Endothelial cell of umbilical vein (primary cell): ENCODE measurements at regions of chr10 and their contacts with region 1.

Region 1: DNA sequence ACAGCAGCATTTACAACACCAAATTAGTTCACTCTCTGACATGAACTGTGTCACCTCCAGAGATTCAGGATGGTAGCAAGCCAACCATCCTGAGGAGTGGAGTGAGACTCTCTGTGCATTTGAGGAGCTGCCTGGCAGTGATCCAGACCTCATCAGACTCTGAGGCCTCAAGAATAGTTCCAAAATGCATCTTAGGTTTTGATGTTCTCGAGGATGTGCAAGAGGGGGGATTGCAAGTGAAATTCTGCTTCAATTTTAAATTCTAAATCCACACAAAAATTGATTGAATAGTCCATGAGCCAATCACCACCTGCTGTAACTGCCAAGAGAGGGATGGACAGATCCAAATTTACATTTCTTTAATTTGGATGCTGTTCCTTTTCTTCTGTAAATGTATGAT is 49.7 kb downstream of the SLK start:
- DNase-seq: no peak
- H3K4me3 ChIP-seq: no peak overlapping the region
- H3K27ac ChIP-seq: no peak overlapping the region
- H3K4me1 ChIP-seq: peaks cover 13% of the 10 kb centered on the region
- H3K27me3 ChIP-seq: no peaks in the 10 kb centered on the region
- CTCF ChIP-seq: no peak
- POLR2A ChIP-seq: no peak

Region 2: GRCh38 chr10:103918053-103918846 is 98.4 kb before region 1 on chr10 and contains the start of gene STN1:
- CTCF ChIA-PET with region 1: no interaction called
- POLR2A ChIA-PET with region 1: interaction called, 14 read pairs
- dilution Hi-C with region 1: no loop called
- intact Hi-C with region 1: loop called (anchors 5 kb)
- DNase-seq: peak; percentile 96
- H3K4me3 ChIP-seq: peak within 1 kb of the TSS; percentile 15 to 63 (median 39)
- H3K27ac ChIP-seq: peak within 1 kb of the TSS; percentile 76
- H3K4me1 ChIP-seq: peaks cover 36% of the 10 kb centered on the region
- H3K27me3 ChIP-seq: no peaks in the 10 kb centered on the region
- CTCF ChIP-seq: no peak
- POLR2A ChIP-seq: peak; percentile 81
- total RNA-seq, gene STN1: 12.7 and 15.3 TPM in 2 replicates

Region 3: DNA sequence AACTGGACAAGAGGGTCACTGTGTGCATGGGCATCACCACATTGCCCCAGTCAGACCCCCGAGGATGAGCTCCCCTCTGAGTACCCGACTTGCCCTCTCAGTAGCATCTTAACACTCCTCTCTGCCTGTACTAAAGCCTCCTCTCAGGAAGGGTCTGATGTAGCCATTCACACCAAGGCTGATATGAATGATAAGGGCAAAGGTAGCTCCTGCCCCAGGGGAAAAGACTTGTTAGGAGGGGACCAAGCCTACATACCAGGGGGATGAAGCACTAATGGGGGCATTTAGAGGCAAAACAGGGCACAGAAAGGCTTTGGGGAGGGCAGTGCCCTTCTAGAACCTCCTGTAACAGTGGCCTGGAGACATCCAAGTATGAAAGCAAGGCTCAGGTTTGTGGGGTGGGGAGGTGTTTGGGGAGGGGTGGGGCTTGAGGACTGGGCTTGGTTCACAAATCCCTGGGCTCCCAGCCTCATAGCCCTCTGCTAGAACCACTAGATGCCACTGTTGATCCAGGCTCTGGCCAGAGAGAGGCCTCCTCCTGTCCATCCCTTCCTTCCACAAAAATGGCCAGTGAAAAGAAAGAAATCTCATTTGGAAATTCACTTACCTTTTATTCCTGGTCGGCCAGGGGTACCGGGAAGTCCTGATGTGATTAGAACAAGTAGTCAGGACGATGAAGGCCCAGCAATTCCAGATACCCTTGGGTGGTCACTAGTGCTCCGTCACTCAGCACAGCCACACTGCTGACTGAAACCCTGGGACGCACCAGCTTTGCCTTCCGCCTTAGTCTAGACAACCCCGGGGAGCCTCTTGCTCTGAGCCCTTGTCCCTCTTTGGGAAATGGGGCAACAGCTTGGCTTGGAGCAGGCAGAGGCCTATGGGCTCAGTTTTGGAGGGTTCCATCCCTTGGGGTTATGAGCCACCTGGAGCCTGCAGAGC is 28.8 kb after region 1 on chr10:
- CTCF ChIA-PET with region 1: no interaction called
- POLR2A ChIA-PET with region 1: no interaction called
- dilution Hi-C with region 1: no loop called
- intact Hi-C with region 1: no loop called
- DNase-seq: peak; percentile 76
- H3K4me3 ChIP-seq: no peak overlapping the region
- H3K27ac ChIP-seq: no peak overlapping the region
- H3K4me1 ChIP-seq: peaks cover 17% of the 10 kb centered on the region
- H3K27me3 ChIP-seq: no peaks in the 10 kb centered on the region
- CTCF ChIP-seq: peak; percentile 56 to 86
- POLR2A ChIP-seq: no peak